Activated B cell treated with CpG ODN at 0.5 μM for 24 hours (primary cell): ENCODE measurements at regions of chr17 and their contacts with region 1.

Region 1: GRCh38 chr17:44218344-44219107 is 949 bp downstream of the UBTF start:
- DNase-seq: peak; percentile 89
- ATAC-seq: peak; percentile 46
- H3K4me3 Mint-ChIP-seq: peak overlapping the region; percentile 83
- H3K27ac Mint-ChIP-seq: peak overlapping the region; percentile 94
- H3K4me1 Mint-ChIP-seq: peaks cover 58% of the 10 kb centered on the region
- H3K27me3 Mint-ChIP-seq: no peaks in the 10 kb centered on the region
- CTCF ChIP-seq: no peak

Region 2: GRCh38 chr17:44141717-44142285 is 76.7 kb before region 1 on chr17 and contains the start of gene HROB:
- CTCF ChIA-PET with region 1: no interaction called
- POLR2A ChIA-PET with region 1: interaction called, 6 read pairs
- intact Hi-C with region 1: loop called (anchors 2 kb)
- DNase-seq: peak; percentile 96
- ATAC-seq: peak; percentile 98
- H3K4me3 Mint-ChIP-seq: peak within 1 kb of the TSS; percentile 84
- H3K27ac Mint-ChIP-seq: peak within 1 kb of the TSS; percentile 70
- H3K4me1 Mint-ChIP-seq: peaks cover 15% of the 10 kb centered on the region
- H3K27me3 Mint-ChIP-seq: peaks cover 8% of the 10 kb centered on the region
- CTCF ChIP-seq: no peak
- total RNA-seq, gene HROB: 2.2 and 5.0 TPM in 2 replicates

Region 3: DNA sequence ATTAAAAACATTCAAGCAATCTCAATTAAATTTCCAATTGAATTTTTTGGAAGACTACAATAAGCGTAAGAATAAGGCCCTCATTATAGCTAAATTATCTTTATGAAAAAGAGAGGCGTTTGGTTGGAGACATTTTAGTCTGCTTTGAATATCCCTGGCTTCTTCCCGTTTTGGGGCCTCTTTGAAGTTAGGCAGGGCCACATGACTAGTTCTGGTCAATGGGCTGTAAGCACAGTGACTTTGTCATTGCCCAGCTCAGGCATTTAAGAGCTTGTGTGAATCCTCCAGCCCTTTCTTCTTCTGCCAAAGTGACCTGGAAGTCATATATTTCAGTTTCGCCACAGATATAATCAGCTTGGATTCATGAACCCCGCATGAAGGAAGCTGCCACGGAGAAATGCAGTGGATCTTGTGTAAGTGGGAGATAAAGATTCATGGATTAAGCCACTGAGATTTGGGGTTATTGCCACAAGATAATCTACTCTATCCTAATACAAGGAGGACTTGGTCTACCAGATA is 22.6 kb after region 1 on chr17:
- CTCF ChIA-PET with region 1: no interaction called
- POLR2A ChIA-PET with region 1: interaction called, 30 read pairs
- intact Hi-C with region 1: no loop called
- DNase-seq: no peak
- ATAC-seq: no peak
- H3K4me3 Mint-ChIP-seq: no peak overlapping the region
- H3K27ac Mint-ChIP-seq: no peak overlapping the region
- H3K4me1 Mint-ChIP-seq: peaks cover 21% of the 10 kb centered on the region
- H3K27me3 Mint-ChIP-seq: no peaks in the 10 kb centered on the region
- CTCF ChIP-seq: no peak

Region 4: GRCh38 chr17:44314869-44315661 is 96.5 kb after region 1 on chr17:
- CTCF ChIA-PET with region 1: interaction called, 3 read pairs
- POLR2A ChIA-PET with region 1: interaction called, 24 read pairs
- intact Hi-C with region 1: no loop called
- DNase-seq: no peak
- ATAC-seq: peak; percentile 63
- H3K4me3 Mint-ChIP-seq: peak overlapping the region; percentile 66
- H3K27ac Mint-ChIP-seq: no peak overlapping the region
- H3K4me1 Mint-ChIP-seq: peaks cover 17% of the 10 kb centered on the region
- H3K27me3 Mint-ChIP-seq: peaks cover 39% of the 10 kb centered on the region
- CTCF ChIP-seq: no peak

Region 5: GRCh38 chr17:44344939-44345453 is 126.5 kb after region 1 on chr17 and contains the start of gene GRN:
- CTCF ChIA-PET with region 1: interaction called, 108 read pairs
- POLR2A ChIA-PET with region 1: interaction called, 241 read pairs
- intact Hi-C with region 1: loop called (anchors 1 kb)
- DNase-seq: peak; percentile 76
- ATAC-seq: peak; percentile 70
- H3K4me3 Mint-ChIP-seq: peak within 1 kb of the TSS; percentile 97
- H3K27ac Mint-ChIP-seq: peak within 1 kb of the TSS; percentile 89
- H3K4me1 Mint-ChIP-seq: peaks cover 58% of the 10 kb centered on the region
- H3K27me3 Mint-ChIP-seq: no peaks in the 10 kb centered on the region
- CTCF ChIP-seq: no peak
- total RNA-seq, gene GRN: 229 and 250 TPM in 2 replicates

Region 6: GRCh38 chr17:44385287-44386181 is 167.0 kb after region 1 on chr17:
- CTCF ChIA-PET with region 1: no interaction called
- POLR2A ChIA-PET with region 1: no interaction called
- intact Hi-C with region 1: no loop called
- DNase-seq: peak; percentile 67
- ATAC-seq: peak; percentile 97
- H3K4me3 Mint-ChIP-seq: peak overlapping the region; percentile 77
- H3K27ac Mint-ChIP-seq: no peak overlapping the region
- H3K4me1 Mint-ChIP-seq: peaks cover 23% of the 10 kb centered on the region
- H3K27me3 Mint-ChIP-seq: peaks cover 31% of the 10 kb centered on the region
- CTCF ChIP-seq: no peak